ENCODE measurements at regions of chr5 and their contacts with region 1.

Region 1: GRCh38 chr5:177403792-177404640 is 3.6 kb upstream of the PFN3 start:
- DNase-seq: peak; percentile 89
- H3K4me3 Mint-ChIP-seq: peak overlapping the region; percentile 87
- H3K27ac Mint-ChIP-seq: peak overlapping the region; percentile 85
- H3K4me1 Mint-ChIP-seq: peaks cover 25% of the 10 kb centered on the region
- H3K27me3 Mint-ChIP-seq: no peaks in the 10 kb centered on the region
- CTCF ChIP-seq: peak; percentile 88

Region 2: GRCh38 chr5:177327539-177328522 is 76.2 kb before region 1 on chr5:
- CTCF ChIA-PET with region 1: interaction called, 11 read pairs
- POLR2A ChIA-PET with region 1: no interaction called
- intact Hi-C with region 1: no loop called
- DNase-seq: peak; percentile 34
- H3K4me3 Mint-ChIP-seq: no peak overlapping the region
- H3K27ac Mint-ChIP-seq: peak overlapping the region; percentile 68
- H3K4me1 Mint-ChIP-seq: peaks cover 20% of the 10 kb centered on the region
- H3K27me3 Mint-ChIP-seq: no peaks in the 10 kb centered on the region
- CTCF ChIP-seq: no peak

Region 3: DNA sequence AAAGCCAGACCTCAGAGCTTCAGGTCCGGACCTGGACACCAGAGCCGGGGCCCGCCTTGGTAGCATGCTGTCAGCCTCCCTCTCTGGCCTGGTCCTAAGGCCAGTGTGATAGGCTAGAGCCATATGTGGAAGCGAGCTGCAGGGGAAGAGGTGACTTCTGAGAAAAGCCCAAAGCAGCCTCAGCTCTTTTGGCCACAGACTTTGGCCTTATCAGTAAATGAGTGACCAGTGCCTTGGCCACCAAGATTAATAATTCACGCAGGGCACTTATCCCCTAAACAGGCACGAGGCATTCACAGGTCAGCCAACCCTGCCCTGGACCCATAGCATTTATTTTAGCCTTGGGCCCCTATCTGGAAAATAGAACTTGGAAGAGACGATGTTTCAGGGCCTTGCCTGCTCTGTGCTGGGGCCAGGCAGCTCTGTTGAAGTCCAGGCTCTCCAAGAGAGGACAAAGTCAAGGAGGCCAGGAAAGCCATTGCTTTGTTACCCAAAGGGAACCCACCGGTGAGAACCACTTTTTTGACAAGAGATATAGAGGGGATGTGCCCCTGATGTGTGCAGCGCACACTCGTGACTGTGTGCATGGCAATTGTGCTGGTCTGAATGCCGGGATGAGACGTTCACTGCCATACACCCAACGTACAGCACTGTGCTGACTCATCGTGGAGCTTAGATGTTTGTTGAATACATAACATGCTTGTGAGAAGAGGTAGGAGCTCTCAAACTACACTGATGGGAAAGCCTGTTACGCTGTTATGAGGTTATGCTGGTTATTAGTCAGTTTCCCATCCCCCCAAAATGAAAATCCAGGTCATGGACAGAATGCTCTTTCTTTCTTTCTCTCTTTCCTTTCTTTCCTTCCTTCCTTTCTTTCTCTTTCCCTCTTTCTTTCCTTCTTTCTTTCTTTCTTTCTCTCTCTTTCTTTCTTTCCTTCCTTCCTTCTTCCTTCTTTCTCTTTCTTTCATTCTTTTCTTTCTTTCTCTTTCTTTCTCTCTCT is 24.8 kb before region 1 on chr5:
- CTCF ChIA-PET with region 1: interaction called, 87 read pairs
- POLR2A ChIA-PET with region 1: no interaction called
- intact Hi-C with region 1: no loop called
- DNase-seq: peak; percentile 75
- H3K4me3 Mint-ChIP-seq: no peak overlapping the region
- H3K27ac Mint-ChIP-seq: no peak overlapping the region
- H3K4me1 Mint-ChIP-seq: peaks cover 15% of the 10 kb centered on the region
- H3K27me3 Mint-ChIP-seq: peaks cover 16% of the 10 kb centered on the region
- CTCF ChIP-seq: no peak

Region 4: DNA sequence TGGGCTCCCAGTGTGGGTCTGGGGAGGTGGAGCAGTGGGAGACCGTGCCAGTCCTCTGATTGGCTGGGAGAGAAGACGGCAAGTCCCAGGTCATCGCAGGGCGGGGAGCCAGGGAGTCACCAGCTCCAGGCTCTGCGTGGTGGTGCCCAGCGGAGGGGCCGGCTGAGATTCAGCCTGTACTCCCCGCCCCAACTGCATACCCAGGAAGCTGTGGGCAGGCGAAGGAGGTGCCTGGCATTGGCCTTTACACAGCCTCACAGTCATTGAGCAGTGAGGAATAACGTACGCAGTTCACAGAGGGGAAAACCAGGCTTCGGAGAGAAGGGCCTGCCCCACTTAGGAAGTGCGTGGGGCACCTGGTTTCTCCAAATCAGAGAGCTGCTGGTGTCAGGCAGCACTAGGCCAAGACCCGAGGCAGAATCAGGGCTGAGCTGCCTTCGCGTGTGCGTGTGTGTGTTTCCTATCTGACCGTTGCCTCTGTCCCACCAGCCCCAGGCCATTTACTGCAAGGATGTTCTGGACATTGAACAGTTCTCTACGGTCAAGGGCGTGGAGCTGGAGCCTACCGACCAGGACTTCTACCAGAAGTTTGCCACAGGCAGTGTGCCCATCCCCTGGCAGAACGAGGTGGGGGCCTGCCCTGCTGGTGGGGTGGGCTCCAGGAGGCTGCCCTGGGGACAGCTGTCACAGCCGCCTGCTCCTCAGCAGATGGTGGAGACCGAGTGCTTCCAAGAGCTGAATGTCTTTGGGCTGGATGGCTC is 36.4 kb after region 1 on chr5:
- CTCF ChIA-PET with region 1: interaction called, 277 read pairs
- POLR2A ChIA-PET with region 1: interaction called, 202 read pairs
- intact Hi-C with region 1: no loop called
- DNase-seq: no peak
- H3K4me3 Mint-ChIP-seq: no peak overlapping the region
- H3K27ac Mint-ChIP-seq: no peak overlapping the region
- H3K4me1 Mint-ChIP-seq: peaks cover 17% of the 10 kb centered on the region
- H3K27me3 Mint-ChIP-seq: no peaks in the 10 kb centered on the region
- CTCF ChIP-seq: no peak

Region 5: GRCh38 chr5:177497292-177498033 is 93.4 kb after region 1 on chr5 and contains the start of gene PDLIM7:
- CTCF ChIA-PET with region 1: interaction called, 55 read pairs
- POLR2A ChIA-PET with region 1: interaction called, 18 read pairs
- intact Hi-C with region 1: no loop called
- DNase-seq: peak; percentile 99
- H3K4me3 Mint-ChIP-seq: peak within 1 kb of the TSS; percentile 74
- H3K27ac Mint-ChIP-seq: peak within 1 kb of the TSS; percentile 55
- H3K4me1 Mint-ChIP-seq: peaks cover 58% of the 10 kb centered on the region
- H3K27me3 Mint-ChIP-seq: no peaks in the 10 kb centered on the region
- CTCF ChIP-seq: no peak
- total RNA-seq, gene PDLIM7: 164 and 257 TPM in 2 replicates